ENCODE measurements at regions of chr11 and their contacts with region 1.

Region 1: GRCh38 chr11:6353367-6353987 is 33.2 kb upstream of the CAVIN3 start:
- DNase-seq: peak; percentile 71
- ATAC-seq: peak; percentile 64
- H3K4me3 ChIP-seq: no peak overlapping the region
- H3K4me3 Mint-ChIP-seq: no peak overlapping the region
- H3K27ac ChIP-seq: no peak overlapping the region
- H3K27ac Mint-ChIP-seq: no peak overlapping the region
- H3K4me1 ChIP-seq: peaks cover 0 to 6% of the 10 kb centered on the region in 2 donors
- H3K4me1 Mint-ChIP-seq: no peaks in the 10 kb centered on the region
- H3K27me3 ChIP-seq: peaks cover 0 to 5% (median 0%) of the 10 kb centered on the region in 4 experiments
- H3K27me3 Mint-ChIP-seq: no peaks in the 10 kb centered on the region
- CTCF ChIP-seq: peak; percentile 98

Region 2: GRCh38 chr11:6022956-6023355 is 330.5 kb before region 1 on chr11:
- CTCF ChIA-PET with region 1: interaction called, 11 read pairs
- POLR2A ChIA-PET with region 1: no interaction called
- intact Hi-C with region 1: no loop called
- DNase-seq: peak; percentile 25
- ATAC-seq: no peak
- H3K4me3 ChIP-seq: no peak overlapping the region
- H3K4me3 Mint-ChIP-seq: no peak overlapping the region
- H3K27ac ChIP-seq: no peak overlapping the region
- H3K27ac Mint-ChIP-seq: no peak overlapping the region
- H3K4me1 ChIP-seq: no peaks in the 10 kb centered on the region
- H3K4me1 Mint-ChIP-seq: no peaks in the 10 kb centered on the region
- H3K27me3 ChIP-seq: no peaks in the 10 kb centered on the region
- H3K27me3 Mint-ChIP-seq: peaks cover 25% of the 10 kb centered on the region
- CTCF ChIP-seq: peak; percentile 35

Region 3: GRCh38 chr11:6251120-6251733 is 102.2 kb before region 1 on chr11:
- CTCF ChIA-PET with region 1: interaction called, 20 read pairs
- POLR2A ChIA-PET with region 1: no interaction called
- intact Hi-C with region 1: loop called (anchors 5 kb)
- DNase-seq: peak; percentile 36
- ATAC-seq: no peak
- H3K4me3 ChIP-seq: no peak overlapping the region
- H3K4me3 Mint-ChIP-seq: no peak overlapping the region
- H3K27ac ChIP-seq: no peak overlapping the region
- H3K27ac Mint-ChIP-seq: no peak overlapping the region
- H3K4me1 ChIP-seq: no peaks in the 10 kb centered on the region
- H3K4me1 Mint-ChIP-seq: no peaks in the 10 kb centered on the region
- H3K27me3 ChIP-seq: peaks cover 0 to 18% (median 0%) of the 10 kb centered on the region in 4 experiments
- H3K27me3 Mint-ChIP-seq: peaks cover 3% of the 10 kb centered on the region
- CTCF ChIP-seq: peak; percentile 67